ENCODE measurements at regions of chr17 and their contacts with region 1.

Region 1: DNA sequence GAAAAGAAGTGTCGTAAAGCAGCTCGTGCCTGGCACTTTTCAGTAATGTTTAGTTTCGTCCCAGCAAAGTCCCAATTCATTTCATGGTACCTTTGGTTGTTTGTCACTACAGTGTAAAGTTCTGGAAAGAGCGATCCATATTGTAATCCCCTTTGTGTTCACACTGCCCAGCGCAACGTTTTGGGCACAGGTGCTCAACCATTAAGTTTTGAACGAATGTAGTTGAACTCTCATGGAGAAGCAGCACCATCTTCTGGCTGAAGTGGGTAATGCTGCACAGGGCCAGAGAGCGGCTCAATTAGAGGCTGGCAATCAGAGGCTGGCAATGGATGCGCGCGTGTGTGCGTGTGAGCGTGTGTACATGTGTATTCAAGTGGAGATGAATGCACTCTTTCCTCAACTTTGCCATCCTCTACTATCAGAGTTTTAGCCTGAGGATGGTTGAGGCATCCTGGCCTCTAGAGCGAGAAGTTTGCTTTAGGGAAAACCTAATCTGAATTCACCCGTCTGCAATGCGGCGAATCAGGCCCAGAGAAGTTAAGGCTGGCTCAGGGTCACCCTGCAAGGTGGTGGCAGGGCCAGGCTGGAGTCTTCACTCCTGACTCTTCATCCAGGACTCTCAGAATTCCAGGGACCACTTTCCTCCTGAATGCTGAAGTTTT is 29.9 kb downstream of the DYNLL2 start:
- DNase-seq: peak; percentile 55
- H3K4me3 ChIP-seq: no peak overlapping the region
- H3K27ac ChIP-seq: no peak overlapping the region
- H3K4me1 ChIP-seq: no peaks in the 10 kb centered on the region
- H3K27me3 ChIP-seq: no peaks in the 10 kb centered on the region
- CTCF ChIP-seq: peak; percentile 95 to 98

Region 2: DNA sequence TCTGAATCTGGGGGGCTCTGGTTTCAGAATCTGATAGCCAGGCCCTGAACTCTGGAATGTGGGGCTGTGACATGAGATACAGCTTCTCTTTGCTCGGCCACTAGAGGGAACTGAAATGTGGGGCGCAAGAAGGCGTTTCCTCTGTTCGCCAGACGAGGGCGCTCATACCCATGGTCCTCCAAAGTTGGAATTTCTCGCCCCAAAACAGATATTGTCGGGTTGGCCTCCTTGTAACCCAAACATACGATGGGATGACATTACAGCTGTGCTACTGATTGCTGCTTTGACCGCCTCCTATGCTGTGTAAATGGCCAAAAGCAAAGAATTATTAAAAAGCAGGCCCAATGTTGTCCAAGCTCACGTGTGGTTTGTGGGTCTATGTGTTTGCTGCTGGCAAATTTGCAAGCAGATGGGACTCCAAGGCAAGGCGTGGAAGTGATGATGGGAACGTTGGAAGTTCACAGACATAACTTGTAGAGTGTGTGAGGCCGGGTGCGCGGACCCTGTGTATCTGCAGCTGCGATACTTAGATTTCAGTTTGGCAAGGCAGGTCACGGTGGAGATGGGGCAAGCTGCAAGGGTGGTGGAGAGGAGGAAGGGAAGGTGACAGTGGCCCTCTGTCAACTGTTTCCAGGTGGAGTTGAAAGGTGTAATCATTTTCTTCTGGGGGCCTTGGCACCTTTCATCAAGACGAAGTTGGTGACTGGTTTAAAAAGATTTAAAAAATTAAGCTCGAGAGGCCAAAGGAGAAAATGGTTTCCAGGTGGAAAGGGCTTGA is 869.7 kb before region 1 on chr17:
- CTCF ChIA-PET with region 1: no interaction called
- dilution Hi-C with region 1: no loop called
- in situ Hi-C with region 1: no loop called
- intact Hi-C with region 1: loop called (anchors 2 kb)
- DNase-seq: peak; percentile 45
- H3K4me3 ChIP-seq: no peak overlapping the region
- H3K27ac ChIP-seq: no peak overlapping the region
- H3K4me1 ChIP-seq: no peaks in the 10 kb centered on the region
- H3K27me3 ChIP-seq: no peaks in the 10 kb centered on the region
- CTCF ChIP-seq: peak; percentile 100

Region 3: DNA sequence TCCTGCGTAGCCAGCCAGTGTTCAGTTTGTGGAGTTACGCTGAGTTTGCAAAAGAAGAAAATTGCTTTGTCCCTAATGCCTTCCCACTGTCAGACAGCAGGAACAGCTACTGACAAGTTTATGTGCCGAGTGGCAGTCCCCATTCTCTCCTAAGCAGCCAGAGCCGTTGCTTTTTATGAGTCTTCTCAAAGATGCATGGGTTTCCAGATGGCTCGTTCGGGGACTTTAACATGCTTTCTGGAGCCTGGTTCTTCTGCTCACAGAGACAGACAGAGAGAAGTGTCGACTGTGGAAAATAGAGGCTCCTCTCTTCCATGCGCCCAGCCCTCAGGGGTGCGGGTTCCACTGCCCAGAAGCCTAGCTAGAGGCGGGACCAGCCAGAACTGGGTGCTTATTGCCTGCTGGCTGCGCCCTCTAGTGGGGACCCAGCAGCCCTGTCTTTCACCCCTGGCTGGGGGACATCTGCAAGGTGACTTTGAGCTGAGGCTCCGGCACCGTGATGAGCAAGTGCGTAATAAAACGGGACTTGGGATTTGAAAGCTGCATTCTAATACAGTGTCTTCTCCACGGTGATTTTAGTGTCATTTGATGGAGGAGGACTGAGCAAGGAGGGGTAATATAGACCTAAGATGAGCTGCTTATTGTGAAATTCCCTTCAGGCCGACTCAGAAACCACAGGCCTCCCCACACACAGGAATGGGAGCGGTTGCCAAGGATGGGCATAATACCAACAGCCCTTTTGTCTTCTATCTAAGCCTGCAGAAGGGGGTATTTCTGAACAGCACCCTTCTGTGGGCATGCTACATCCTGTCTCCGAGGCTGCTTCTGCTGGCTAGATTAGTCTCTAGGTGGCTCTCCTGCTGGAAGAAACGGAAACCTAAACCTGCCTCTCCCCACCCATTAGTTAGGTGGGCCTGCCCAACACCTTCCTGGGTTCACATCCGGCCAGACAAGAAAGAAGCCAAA is 441.2 kb before region 1 on chr17:
- CTCF ChIA-PET with region 1: no interaction called
- dilution Hi-C with region 1: no loop called
- in situ Hi-C with region 1: no loop called
- intact Hi-C with region 1: loop called (anchors 2 kb)
- DNase-seq: peak; percentile 93
- H3K4me3 ChIP-seq: no peak overlapping the region
- H3K27ac ChIP-seq: peak overlapping the region; percentile 71
- H3K4me1 ChIP-seq: peaks cover 25% of the 10 kb centered on the region
- H3K27me3 ChIP-seq: no peaks in the 10 kb centered on the region
- CTCF ChIP-seq: peak; percentile 95

Region 4: DNA sequence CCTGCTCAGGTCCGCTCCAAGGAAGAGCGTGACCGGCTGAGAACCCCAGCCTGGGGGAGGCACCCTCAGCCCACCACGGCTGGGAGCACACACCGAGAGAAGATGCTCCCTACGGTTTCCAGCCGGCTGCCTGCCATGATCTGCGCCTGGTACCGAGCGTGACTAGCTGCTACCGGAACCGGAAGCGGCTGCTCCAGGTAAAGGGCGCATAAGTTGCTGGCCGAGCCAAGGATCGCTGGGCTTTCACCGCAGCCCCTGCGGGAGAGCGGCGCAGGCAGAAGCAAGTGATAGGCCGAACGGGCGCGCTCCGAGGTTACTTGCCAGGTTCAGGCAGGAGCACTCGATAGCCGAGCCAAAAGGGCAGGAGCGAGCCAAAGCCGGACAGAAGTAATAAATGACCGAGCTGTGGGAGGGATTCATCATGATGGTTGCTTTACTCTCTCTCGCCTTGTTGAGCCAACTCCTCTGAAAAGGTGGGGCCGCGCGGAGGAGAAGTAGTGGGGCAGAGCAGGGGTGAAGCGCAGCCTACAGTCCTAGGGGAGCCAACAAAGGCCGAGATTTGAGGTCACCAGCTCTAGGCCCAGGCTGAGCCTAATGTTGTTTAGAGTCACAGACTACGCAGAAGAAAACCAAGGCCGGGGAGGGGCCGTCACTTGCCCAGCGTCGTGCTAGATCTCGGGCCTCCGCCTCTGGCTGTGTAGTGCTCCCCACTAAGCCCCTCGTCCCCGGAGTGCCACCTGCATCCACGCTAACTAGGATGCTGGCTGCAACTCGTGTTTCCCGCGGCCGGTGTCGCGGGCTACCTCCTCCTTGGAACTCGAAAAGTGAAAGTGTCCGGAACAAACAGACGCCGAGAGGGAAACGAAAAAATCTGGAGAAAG is 263.0 kb before region 1 on chr17 and contains the start of gene MRPS23:
- CTCF ChIA-PET with region 1: no interaction called
- dilution Hi-C with region 1: no loop called
- in situ Hi-C with region 1: loop called in 1 of 2 experiments (anchors 10 kb)
- intact Hi-C with region 1: loop called (anchors 2 kb)
- DNase-seq: peak; percentile 99
- H3K4me3 ChIP-seq: peak within 1 kb of the TSS; percentile 80 to 98 (median 86)
- H3K27ac ChIP-seq: peak within 1 kb of the TSS; percentile 73
- H3K4me1 ChIP-seq: peaks cover 15% of the 10 kb centered on the region
- H3K27me3 ChIP-seq: no peaks in the 10 kb centered on the region
- CTCF ChIP-seq: no peak
- total RNA-seq, gene MRPS23: 17.7 to 48.4 TPM

Region 5: DNA sequence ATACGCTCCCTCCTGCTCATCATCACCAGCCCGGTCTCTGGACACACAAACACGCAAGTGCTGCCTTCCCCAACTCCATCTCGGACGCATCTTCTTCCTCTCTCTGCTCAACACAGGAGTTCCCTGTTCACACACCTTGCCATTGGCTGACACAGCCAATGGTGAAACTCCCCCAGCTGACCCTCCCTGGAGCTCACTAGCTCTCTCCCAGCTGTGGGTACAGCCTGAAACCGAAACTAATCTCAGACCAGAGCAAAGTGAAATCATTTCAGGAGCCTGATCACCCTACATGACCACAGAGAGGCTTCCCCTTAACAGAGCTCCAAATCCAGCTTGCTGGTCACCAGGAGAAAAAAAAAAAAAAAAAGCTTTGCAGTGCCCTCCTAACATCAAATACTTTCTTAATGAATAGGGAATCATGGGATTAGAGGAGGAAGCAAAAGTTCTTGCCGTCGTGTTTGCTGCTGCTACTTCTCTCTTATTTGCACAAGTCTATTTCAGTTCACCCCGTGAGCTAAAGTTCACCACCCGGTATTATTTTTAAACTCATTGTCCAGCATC is 166.2 kb before region 1 on chr17:
- CTCF ChIA-PET with region 1: no interaction called
- dilution Hi-C with region 1: no loop called
- in situ Hi-C with region 1: no loop called
- intact Hi-C with region 1: loop called (anchors 1 kb)
- DNase-seq: peak; percentile 69
- H3K4me3 ChIP-seq: no peak overlapping the region
- H3K27ac ChIP-seq: no peak overlapping the region
- H3K4me1 ChIP-seq: peaks cover 39% of the 10 kb centered on the region
- H3K27me3 ChIP-seq: no peaks in the 10 kb centered on the region
- CTCF ChIP-seq: no peak

Region 6: GRCh38 chr17:58172369-58173071 is 59.4 kb after region 1 on chr17:
- CTCF ChIA-PET with region 1: no interaction called
- dilution Hi-C with region 1: no loop called
- in situ Hi-C with region 1: no loop called
- intact Hi-C with region 1: loop called (anchors 1 kb)
- DNase-seq: peak; percentile 35
- H3K4me3 ChIP-seq: no peak overlapping the region
- H3K27ac ChIP-seq: no peak overlapping the region
- H3K4me1 ChIP-seq: no peaks in the 10 kb centered on the region
- H3K27me3 ChIP-seq: no peaks in the 10 kb centered on the region
- CTCF ChIP-seq: peak; percentile 57 to 68

Measured in mammary epithelial cell (primary cell).